ENCODE measurements at regions of chr4 and their contacts with region 1.

Region 1: GRCh38 chr4:13920901-13921300 is 293.4 kb upstream of the BOD1L1 start:
- DNase-seq: peak; percentile 78 to 97
- H3K4me3 ChIP-seq: no peak overlapping the region
- H3K27ac ChIP-seq: peak overlapping the region; percentile 99
- H3K4me1 ChIP-seq: peaks cover 37% of the 10 kb centered on the region
- H3K27me3 ChIP-seq: no peaks in the 10 kb centered on the region
- CTCF ChIP-seq: no peak

Region 2: GRCh38 chr4:13966231-13967195 is 45.6 kb after region 1 on chr4:
- CTCF ChIA-PET with region 1: no interaction called
- POLR2A ChIA-PET with region 1: no interaction called
- intact Hi-C with region 1: no loop called
- DNase-seq: no peak
- H3K4me3 ChIP-seq: no peak overlapping the region
- H3K27ac ChIP-seq: no peak overlapping the region
- H3K4me1 ChIP-seq: no peaks in the 10 kb centered on the region
- H3K27me3 ChIP-seq: no peaks in the 10 kb centered on the region
- CTCF ChIP-seq: no peak

Region 3: GRCh38 chr4:13988353-13989305 is 67.7 kb after region 1 on chr4:
- CTCF ChIA-PET with region 1: no interaction called
- POLR2A ChIA-PET with region 1: interaction called, 4 read pairs
- intact Hi-C with region 1: loop called (anchors 1 kb)
- DNase-seq: peak; percentile 31 to 84
- H3K4me3 ChIP-seq: peak overlapping the region; percentile 10; the same call in 1 of the 2 replicates
- H3K27ac ChIP-seq: peak overlapping the region; percentile 93
- H3K4me1 ChIP-seq: peaks cover 39% of the 10 kb centered on the region
- H3K27me3 ChIP-seq: no peaks in the 10 kb centered on the region
- CTCF ChIP-seq: no peak